ENCODE measurements at regions of chr5 and their contacts with region 1.

Region 1: DNA sequence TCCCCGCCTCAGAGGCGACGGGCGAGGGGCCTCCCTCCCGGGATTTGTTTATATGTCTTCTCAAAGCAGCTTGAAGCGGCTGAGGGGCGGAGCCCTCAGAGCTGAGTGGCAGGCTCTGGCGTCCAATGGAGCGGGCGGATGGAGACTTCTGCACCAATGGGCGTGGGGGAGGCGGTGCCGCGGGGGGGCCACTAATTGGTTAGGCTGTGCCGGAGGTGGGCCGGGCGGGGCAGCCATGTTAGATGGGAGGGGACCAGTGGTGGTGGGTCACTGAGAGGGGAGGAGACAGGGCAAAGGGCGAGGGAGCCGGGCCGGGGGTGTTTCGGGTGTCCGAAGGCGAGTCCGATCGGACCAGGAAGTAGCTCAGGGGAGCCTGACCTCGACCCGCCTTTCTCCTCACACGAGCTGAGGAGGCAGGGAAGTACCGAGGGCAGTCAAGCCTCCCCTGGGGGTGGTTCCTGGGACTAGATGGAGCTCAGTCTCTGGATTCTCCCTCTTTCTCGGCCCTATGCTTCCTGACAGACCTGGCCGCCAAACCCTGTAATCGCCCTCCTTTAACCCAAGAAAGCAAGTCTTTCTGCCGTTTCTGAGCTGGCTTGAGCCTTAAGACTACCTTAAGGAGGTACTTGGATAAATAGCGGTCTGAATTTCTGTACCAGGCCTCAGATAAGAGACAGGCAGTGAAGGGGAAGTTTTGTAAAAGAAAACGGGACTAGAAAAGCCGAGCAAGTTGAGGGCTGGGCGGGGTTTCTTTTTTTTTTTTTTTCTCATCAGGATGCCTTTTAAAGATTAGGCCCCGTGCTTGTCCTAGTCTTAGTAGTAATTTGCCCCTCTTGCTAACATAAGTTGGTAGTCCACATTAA is 1.1 kb downstream of the CREBRF start:
- DNase-seq: peak; percentile 96 to 99 (median 98)
- ATAC-seq: peak; percentile 90
- H3K4me3 ChIP-seq: peak overlapping the region; percentile 96
- H3K4me3 Mint-ChIP-seq: peak overlapping the region; percentile 91 to 97 (median 94)
- H3K27ac ChIP-seq: peak overlapping the region; percentile 97
- H3K27ac Mint-ChIP-seq: peak overlapping the region; percentile 90 to 96 (median 94)
- H3K4me1 ChIP-seq: peaks cover 22 to 33% of the 10 kb centered on the region in 2 donors
- H3K4me1 Mint-ChIP-seq: peaks cover 21 to 72% (median 59%) of the 10 kb centered on the region in 7 donors
- H3K27me3 ChIP-seq: peaks cover 0 to 5% of the 10 kb centered on the region in 2 donors
- H3K27me3 Mint-ChIP-seq: no peaks in the 10 kb centered on the region

Region 2: DNA sequence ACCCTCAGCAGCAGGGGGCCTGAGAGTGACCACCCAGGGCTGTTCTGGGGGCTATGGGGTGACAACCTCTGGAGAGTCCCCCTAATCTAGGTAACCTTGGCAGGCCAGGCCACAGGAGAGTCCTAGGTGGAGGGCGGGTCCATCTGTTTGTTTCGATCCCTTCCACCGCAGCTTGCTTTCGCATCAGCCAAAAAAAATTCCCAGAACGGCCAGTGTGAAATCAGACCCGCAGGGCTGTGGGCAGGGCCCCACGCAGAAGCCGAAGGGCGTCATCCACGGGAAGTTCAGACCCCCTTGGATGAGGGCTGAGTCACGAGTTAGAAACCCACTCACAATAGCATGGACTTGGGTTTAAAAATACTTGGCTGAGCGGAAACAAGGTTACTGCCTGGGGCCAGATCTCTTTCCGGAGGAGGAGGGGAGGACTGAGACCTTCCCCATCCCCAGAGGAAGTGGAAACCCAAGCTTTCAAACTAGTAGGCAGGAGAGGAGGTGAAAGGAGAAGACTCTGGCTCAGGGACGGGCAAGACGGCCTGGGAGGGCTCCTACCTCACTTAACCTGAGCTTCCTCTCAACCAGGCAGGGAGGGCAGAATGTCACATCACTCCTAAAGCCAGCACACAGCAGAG is 877.8 kb before region 1 on chr5:
- CTCF ChIA-PET with region 1: no interaction called
- POLR2A ChIA-PET with region 1: no interaction called
- intact Hi-C with region 1: loop called (anchors 2 kb)
- DNase-seq: peak in 8 of 9 donors; percentile 40 to 68 (median 50)
- ATAC-seq: peak; percentile 8
- H3K4me3 ChIP-seq: peak overlapping the region; percentile 76
- H3K4me3 Mint-ChIP-seq: peak overlapping the region; percentile 78 to 99 (median 90)
- H3K27ac ChIP-seq: peak overlapping the region; percentile 92
- H3K27ac Mint-ChIP-seq: peak overlapping the region; percentile 94 to 100 (median 98)
- H3K4me1 ChIP-seq: peaks cover 86 to 87% of the 10 kb centered on the region in 2 donors
- H3K4me1 Mint-ChIP-seq: peaks cover 48 to 95% (median 84%) of the 10 kb centered on the region in 7 donors
- H3K27me3 ChIP-seq: no peaks in the 10 kb centered on the region
- H3K27me3 Mint-ChIP-seq: no peaks in the 10 kb centered on the region

Region 3: DNA sequence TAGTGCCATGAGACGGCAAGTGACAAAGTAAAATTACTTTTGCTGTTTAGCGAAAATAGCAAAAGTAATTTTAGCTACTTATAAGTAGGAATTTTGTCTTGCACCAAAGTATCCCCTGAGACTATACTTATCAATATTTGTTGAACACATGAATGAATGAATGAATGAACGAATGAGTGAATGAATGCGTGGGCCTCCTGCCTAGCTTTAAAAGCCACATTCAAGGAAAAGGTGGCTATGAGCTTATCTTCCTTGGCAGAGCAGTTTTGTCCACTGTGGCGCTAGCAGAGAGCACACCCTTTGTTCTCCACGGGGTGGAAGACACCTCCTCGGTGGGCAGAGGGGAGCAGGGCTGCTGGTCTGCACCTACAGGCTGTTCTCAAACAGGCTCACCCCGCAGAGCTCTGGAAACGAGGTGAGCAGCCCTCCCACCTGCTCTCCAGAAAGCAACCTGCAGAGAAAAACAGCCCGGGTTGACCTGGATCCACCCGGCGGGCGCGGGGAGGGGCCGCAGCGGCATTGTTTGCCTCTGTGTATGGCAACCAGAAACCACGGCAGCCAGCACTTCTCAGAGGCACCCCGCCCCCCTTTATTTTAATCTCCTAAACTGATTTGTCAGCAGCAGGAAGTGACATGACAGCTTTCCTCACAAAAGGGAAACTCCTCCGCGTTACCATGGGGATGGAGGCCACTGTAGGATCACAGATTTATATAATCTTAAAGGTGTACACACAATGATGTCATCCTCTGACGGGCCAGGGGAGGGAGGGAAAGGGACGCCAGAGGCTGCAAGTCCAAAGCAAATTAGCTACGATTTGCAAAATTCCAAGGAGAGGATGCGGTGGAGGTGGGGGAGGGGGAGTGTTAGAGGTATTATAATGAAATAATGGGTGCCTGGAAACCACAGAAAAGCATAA is 292.2 kb before region 1 on chr5:
- CTCF ChIA-PET with region 1: no interaction called
- POLR2A ChIA-PET with region 1: no interaction called
- intact Hi-C with region 1: loop called (anchors 1 kb)
- DNase-seq: peak; percentile 86 to 100 (median 99)
- ATAC-seq: peak; percentile 73
- H3K4me3 ChIP-seq: peak overlapping the region; percentile 64
- H3K4me3 Mint-ChIP-seq: peak overlapping the region; percentile 80 to 93 (median 84)
- H3K27ac ChIP-seq: peak overlapping the region; percentile 93
- H3K27ac Mint-ChIP-seq: peak overlapping the region; percentile 94 to 100 (median 97)
- H3K4me1 ChIP-seq: peaks cover 25 to 31% of the 10 kb centered on the region in 2 donors
- H3K4me1 Mint-ChIP-seq: peaks cover 8 to 62% (median 52%) of the 10 kb centered on the region in 7 donors
- H3K27me3 ChIP-seq: no peaks in the 10 kb centered on the region
- H3K27me3 Mint-ChIP-seq: peaks cover 0 to 8% (median 0%) of the 10 kb centered on the region in 5 donors

Region 4: DNA sequence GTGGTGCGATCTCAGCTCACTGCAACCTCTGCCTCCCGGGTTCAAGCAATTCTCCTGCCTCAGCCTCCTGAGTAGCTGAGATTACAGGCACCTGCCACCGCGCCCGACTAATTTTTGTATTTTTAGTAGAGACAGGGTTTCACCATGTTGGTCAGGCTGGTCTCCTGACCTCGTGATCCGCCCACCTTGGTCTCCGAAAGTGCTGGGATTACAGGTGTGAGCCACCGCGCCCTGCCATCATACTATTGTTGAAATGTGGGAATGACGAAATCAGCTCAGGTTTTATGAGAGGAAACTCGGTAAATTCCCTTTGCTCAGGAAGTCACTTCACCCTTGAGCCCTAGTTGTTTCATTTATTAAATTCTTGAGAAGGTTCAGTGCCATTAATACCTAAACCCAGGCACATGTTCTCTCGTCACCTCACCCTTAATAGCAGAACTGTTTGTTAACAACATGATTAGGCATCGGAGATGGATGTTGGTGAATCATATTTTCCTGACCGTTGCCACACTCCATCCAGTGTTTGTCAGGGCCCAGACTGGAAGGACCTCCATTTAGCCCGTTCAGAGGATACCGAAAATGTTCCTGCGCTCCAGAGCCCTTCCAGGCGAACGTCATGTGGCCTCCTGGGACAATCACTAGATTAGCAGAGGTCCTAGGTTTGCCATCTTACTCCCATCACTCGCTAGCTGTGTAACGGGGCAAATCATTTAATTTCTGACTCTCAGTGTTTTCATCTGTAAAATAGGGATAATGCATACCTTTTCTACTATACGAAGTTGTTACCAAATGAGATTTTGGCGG is 21.2 kb before region 1 on chr5:
- CTCF ChIA-PET with region 1: interaction called, 4 read pairs
- POLR2A ChIA-PET with region 1: interaction called, 22 read pairs
- intact Hi-C with region 1: loop called (anchors 1 kb)
- DNase-seq: peak in 1 of 9 donors; percentile 35
- ATAC-seq: peak; percentile 26
- H3K4me3 ChIP-seq: peak overlapping the region; percentile 14
- H3K4me3 Mint-ChIP-seq: peak overlapping the region; percentile 78 to 96 (median 85)
- H3K27ac ChIP-seq: peak overlapping the region; percentile 71
- H3K27ac Mint-ChIP-seq: peak overlapping the region; percentile 93 to 99 (median 97)
- H3K4me1 ChIP-seq: peaks cover 17 to 35% of the 10 kb centered on the region in 2 donors
- H3K4me1 Mint-ChIP-seq: peaks cover 29 to 76% (median 66%) of the 10 kb centered on the region in 7 donors
- H3K27me3 ChIP-seq: no peaks in the 10 kb centered on the region
- H3K27me3 Mint-ChIP-seq: no peaks in the 10 kb centered on the region

Region 5: GRCh38 chr5:173331956-173332479 is 274.7 kb after region 1 on chr5:
- CTCF ChIA-PET with region 1: no interaction called
- POLR2A ChIA-PET with region 1: no interaction called
- intact Hi-C with region 1: loop called in 1 of 2 experiments (anchors 1 kb)
- DNase-seq: peak; percentile 29 to 92 (median 59)
- ATAC-seq: peak; percentile 96
- H3K4me3 ChIP-seq: no peak overlapping the region
- H3K4me3 Mint-ChIP-seq: peak overlapping the region in 2 of 10 donors; percentile 10 to 48
- H3K27ac ChIP-seq: no peak overlapping the region
- H3K27ac Mint-ChIP-seq: peak overlapping the region in 1 of 9 donors; percentile 62
- H3K4me1 ChIP-seq: no peaks in the 10 kb centered on the region
- H3K4me1 Mint-ChIP-seq: peaks cover 10 to 33% (median 17%) of the 10 kb centered on the region in 7 donors
- H3K27me3 ChIP-seq: peaks cover 0 to 3% of the 10 kb centered on the region in 2 donors
- H3K27me3 Mint-ChIP-seq: peaks cover 7 to 71% (median 68%) of the 10 kb centered on the region in 5 donors

Region 6: GRCh38 chr5:174119468-174119881 is 1062.2 kb after region 1 on chr5:
- CTCF ChIA-PET with region 1: no interaction called
- POLR2A ChIA-PET with region 1: no interaction called
- intact Hi-C with region 1: no loop called
- DNase-seq: no peak
- ATAC-seq: no peak
- H3K4me3 ChIP-seq: no peak overlapping the region
- H3K4me3 Mint-ChIP-seq: no peak overlapping the region
- H3K27ac ChIP-seq: no peak overlapping the region
- H3K27ac Mint-ChIP-seq: no peak overlapping the region
- H3K4me1 ChIP-seq: no peaks in the 10 kb centered on the region
- H3K4me1 Mint-ChIP-seq: no peaks in the 10 kb centered on the region
- H3K27me3 ChIP-seq: no peaks in the 10 kb centered on the region
- H3K27me3 Mint-ChIP-seq: peaks cover 0 to 12% (median 0%) of the 10 kb centered on the region in 5 donors